ENCODE measurements at regions of chr15 and their contacts with region 1.

Region 1: GRCh38 chr15:99788183-99788582 is 54.9 kb upstream of the LYSMD4 start:
- DNase-seq: no peak
- ATAC-seq: no peak

Region 2: DNA sequence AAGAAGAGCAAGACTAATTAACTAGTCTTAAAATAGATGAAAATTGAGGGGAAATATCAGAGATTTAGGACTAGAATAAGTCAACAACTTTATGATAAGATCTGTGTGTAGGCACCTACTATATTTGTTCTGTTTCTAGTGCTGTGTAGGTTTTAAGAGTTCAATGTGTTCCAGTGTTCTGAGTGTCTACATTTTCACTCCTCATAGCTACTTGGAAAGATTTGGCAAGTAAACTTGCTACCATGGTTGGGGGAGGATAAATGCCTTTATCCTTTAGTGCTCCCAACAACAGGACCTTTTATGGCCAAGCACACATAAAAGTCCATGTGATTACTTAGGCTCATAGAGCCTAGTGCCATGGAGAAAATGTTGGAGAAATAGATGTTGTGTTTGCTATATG is 119.0 kb before region 1 on chr15:
- intact Hi-C with region 1: no loop called
- DNase-seq: no peak
- ATAC-seq: peak; percentile 71

Region 3: DNA sequence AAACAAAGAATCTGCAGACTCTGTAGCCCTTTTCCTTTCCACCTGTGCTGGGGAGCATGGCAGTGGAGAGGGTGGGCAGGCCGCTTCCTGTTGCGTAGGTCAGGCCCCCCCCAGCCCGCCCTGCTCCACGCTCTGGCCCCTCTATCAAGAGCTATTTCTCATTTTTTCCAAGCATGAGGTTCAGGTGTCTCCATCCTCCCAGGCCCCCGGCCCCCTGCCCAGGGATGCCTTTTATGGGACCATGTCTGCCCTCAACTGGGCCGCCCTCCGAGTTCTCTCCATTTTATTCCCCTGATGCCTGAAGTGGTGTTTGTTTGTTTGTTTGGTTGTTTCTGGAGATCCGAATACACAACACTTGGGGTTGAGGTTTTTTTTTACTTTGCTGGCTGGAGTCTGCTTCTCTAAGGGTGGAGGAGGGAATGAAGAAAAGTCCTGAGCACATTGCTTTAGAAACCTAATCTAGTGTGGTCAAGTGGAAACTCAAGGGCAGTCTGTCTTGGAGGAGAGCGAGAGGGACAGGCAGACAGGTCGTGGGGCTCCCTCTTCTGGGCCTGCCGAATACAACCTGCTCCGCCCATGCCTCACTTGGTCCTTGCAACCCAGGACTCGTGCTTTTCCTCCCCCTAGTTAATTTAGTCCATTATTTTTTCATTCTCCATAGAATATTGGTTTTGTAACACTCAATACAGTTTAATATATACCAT is 121.6 kb after region 1 on chr15:
- intact Hi-C with region 1: loop called in 1 of 2 experiments (anchors 5 kb)
- DNase-seq: no peak
- ATAC-seq: peak; percentile 67 to 72